ENCODE measurements at regions of chr5 and their contacts with region 1.

Region 1: DNA sequence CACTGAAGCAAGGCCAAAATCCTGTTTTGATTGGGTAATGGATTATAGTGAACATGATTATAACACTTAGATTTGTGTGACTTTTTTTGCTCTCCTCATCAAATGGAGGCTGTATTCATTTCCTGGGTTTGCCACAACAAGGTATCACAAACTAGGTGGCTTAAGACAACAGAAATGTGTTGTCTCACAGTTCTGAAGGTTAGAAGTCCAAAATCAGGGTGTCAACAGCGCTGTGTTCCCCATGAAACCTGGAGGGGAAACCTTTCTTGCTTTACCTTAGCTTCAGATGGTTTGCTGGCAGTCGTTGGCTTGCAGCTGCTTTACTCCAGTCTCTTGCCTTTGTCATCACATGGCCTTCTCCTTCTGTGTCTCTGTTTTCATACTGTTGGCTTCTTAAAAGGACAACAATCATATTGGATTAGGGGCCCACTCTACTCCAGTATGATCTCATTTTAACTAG is 32.4 kb downstream of the CDC42SE2 start:
- DNase-seq: no peak
- H3K4me3 ChIP-seq: no peak overlapping the region
- H3K27ac ChIP-seq: no peak overlapping the region
- H3K4me1 ChIP-seq: no peaks in the 10 kb centered on the region
- CTCF ChIP-seq: no peak

Region 2: GRCh38 chr5:131285703-131286394 is 10.4 kb before region 1 on chr5:
- CTCF ChIA-PET with region 1: no interaction called
- POLR2A ChIA-PET with region 1: interaction called, 13 read pairs
- intact Hi-C with region 1: no loop called
- DNase-seq: no peak
- H3K4me3 ChIP-seq: no peak overlapping the region
- H3K27ac ChIP-seq: no peak overlapping the region
- H3K4me1 ChIP-seq: peaks cover 33% of the 10 kb centered on the region
- CTCF ChIP-seq: no peak

Region 3: DNA sequence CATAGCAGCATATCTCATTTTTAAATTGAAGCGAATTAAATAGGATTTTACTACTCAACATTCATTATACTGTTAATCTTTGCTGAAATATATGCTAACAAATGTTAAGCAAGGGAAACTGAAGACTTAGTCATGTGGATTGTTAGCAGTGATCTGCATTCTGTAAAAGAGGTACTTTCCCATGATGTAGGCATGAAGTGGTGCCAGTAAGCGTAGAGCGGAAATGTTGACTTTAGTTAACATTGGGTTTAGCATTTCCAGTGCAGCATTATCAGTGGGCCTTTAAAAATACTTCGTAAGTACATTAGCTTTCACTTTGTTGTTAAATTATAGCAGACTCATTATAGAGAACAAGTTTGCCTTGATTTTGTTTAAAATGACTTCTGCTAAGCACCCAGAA is 97.9 kb after region 1 on chr5:
- CTCF ChIA-PET with region 1: no interaction called
- POLR2A ChIA-PET with region 1: no interaction called
- intact Hi-C with region 1: no loop called
- DNase-seq: no peak
- H3K4me3 ChIP-seq: no peak overlapping the region
- H3K27ac ChIP-seq: no peak overlapping the region
- H3K4me1 ChIP-seq: no peaks in the 10 kb centered on the region
- CTCF ChIP-seq: no peak

Measured in OCI-LY7 (cell line).